WTC11 (cell line): ENCODE measurements at regions of chr1 and their contacts with region 1.

Region 1: GRCh38 chr1:38608202-38608864 is 251.2 kb downstream of the RRAGC start:
- DNase-seq: peak; percentile 87
- ATAC-seq: peak; percentile 95
- H3K4me3 Mint-ChIP-seq: no peak overlapping the region
- H3K27ac Mint-ChIP-seq: no peak overlapping the region
- H3K4me1 Mint-ChIP-seq: peaks cover 12% of the 10 kb centered on the region
- H3K27me3 Mint-ChIP-seq: peaks cover 28% of the 10 kb centered on the region
- CTCF ChIP-seq: peak; percentile 79

Region 2: DNA sequence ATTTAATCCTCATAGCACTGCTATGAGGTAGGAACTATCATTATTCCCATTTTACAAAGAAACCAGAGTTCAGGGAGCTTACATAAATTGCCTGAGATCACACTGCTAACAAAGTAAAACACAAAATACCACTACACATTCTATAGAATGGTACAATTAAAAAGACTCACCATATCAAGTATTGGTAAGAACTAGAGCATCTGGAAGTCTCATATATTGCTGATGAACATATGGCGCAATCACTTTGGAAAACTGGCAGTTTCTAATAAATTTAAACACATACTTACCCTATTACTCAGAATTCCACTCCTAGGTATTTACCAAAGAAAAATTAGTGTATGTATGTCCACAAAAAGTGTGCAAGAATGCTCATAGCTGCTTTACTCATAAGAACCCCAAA is 10.2 kb before region 1 on chr1:
- CTCF ChIA-PET with region 1: no interaction called
- POLR2A ChIA-PET with region 1: no interaction called
- DNase-seq: no peak
- ATAC-seq: no peak
- H3K4me3 Mint-ChIP-seq: no peak overlapping the region
- H3K27ac Mint-ChIP-seq: no peak overlapping the region
- H3K4me1 Mint-ChIP-seq: peaks cover 16% of the 10 kb centered on the region
- H3K27me3 Mint-ChIP-seq: peaks cover 93% of the 10 kb centered on the region
- CTCF ChIP-seq: no peak

Region 3: DNA sequence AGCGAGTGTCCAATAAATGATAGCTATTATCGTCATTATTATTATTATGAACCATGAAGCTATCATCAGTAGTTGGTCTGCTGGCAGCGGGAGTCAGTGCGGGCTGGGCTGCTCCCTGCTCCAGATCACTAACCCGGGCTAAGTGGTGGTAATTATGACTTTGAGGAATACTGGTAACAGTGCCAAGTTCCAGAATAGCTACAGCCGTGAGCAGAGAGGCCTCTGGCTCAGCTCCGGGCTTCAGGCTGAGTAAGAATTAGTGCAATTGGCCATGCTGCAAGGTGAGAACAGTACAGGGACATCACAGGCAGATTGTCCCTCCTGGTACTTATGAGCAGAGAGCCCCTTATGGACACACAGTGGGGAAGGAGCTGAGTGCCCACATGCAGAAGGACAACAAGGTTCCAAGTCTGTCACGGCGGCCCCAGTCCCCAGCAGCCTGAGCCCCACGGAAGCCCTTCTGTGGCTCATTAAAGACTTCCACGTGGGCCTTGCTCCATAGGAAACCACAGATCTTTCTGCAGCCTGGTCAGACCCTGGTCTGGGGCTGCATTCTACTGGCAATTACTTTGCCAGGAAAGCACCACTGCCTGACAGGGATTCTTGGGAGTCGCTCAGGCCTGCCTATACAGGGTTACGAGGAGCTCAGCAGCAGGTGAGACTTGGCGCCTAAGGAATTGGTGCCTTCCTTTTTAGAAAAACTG is 16.2 kb after region 1 on chr1:
- CTCF ChIA-PET with region 1: interaction called, 14 read pairs
- POLR2A ChIA-PET with region 1: no interaction called
- DNase-seq: no peak
- ATAC-seq: no peak
- H3K4me3 Mint-ChIP-seq: no peak overlapping the region
- H3K27ac Mint-ChIP-seq: no peak overlapping the region
- H3K4me1 Mint-ChIP-seq: peaks cover 17% of the 10 kb centered on the region
- H3K27me3 Mint-ChIP-seq: peaks cover 13% of the 10 kb centered on the region
- CTCF ChIP-seq: no peak

Region 4: DNA sequence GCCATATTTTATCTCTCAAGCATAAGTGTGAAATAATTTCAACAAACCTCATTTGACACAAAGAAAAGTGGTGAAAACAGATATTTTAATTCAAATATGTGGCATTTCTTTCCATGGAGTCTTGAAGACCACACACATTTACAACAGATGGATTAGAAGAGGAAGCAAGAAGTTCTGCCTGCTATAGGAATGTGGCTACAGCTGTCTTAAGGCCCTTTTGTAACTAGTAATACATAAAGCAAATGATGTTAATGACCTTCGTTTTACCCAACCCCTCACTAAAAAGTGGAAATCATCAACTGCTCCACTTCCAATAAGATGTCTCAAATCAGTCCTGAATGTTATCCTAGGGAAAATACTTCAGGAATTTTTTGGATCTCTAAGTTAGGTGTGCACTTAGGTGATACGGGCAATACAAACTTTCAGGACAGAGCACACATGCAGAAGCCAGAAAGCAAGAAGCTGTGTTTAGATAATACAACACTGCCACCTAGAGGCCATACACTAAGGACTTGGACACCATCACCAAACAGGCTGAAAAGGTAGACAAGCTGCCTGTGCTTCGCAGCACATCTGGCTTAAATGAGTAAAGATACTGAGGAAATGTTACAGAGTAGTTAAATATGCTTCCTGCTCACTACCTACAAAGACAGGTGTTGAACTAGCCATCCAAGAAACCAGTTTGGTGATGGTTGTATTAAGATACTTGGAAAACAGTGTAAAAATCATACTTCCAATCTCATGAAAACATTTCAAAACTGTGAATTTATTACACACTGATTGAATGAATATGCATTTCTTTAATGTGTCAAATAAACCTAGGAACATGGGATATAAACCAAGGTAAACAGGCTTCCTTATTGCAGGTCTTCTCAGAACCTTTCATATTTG is 226.8 kb after region 1 on chr1:
- CTCF ChIA-PET with region 1: interaction called, 14 read pairs
- POLR2A ChIA-PET with region 1: no interaction called
- DNase-seq: peak; percentile 37
- ATAC-seq: peak; percentile 87
- H3K4me3 Mint-ChIP-seq: no peak overlapping the region
- H3K27ac Mint-ChIP-seq: no peak overlapping the region
- H3K4me1 Mint-ChIP-seq: peaks cover 22% of the 10 kb centered on the region
- H3K27me3 Mint-ChIP-seq: no peaks in the 10 kb centered on the region
- CTCF ChIP-seq: peak; percentile 68